GM12878 (cell line): ENCODE measurements at regions of chr9 and their contacts with region 1.

Region 1: GRCh38 chr9:134391314-134392231 is 65.3 kb downstream of the RXRA start:
- DNase-seq: peak; percentile 69
- ATAC-seq: peak; percentile 72
- H3K4me3 ChIP-seq: peak overlapping the region; percentile 79
- H3K27ac ChIP-seq: peak overlapping the region; percentile 98
- H3K4me1 ChIP-seq: peaks cover 51% of the 10 kb centered on the region
- H3K27me3 ChIP-seq: no peaks in the 10 kb centered on the region
- CTCF ChIP-seq: peak in 1 of 3 experiments; percentile 9; a peak in 1 of 6 replicates
- EP300 ChIP-seq: peak; percentile 74 to 92
- POLR2A ChIP-seq: no peak
- RAD21 ChIP-seq: 0 out of 2 replicates have a peak, but pooled peaks have one; percentile 10

Region 2: DNA sequence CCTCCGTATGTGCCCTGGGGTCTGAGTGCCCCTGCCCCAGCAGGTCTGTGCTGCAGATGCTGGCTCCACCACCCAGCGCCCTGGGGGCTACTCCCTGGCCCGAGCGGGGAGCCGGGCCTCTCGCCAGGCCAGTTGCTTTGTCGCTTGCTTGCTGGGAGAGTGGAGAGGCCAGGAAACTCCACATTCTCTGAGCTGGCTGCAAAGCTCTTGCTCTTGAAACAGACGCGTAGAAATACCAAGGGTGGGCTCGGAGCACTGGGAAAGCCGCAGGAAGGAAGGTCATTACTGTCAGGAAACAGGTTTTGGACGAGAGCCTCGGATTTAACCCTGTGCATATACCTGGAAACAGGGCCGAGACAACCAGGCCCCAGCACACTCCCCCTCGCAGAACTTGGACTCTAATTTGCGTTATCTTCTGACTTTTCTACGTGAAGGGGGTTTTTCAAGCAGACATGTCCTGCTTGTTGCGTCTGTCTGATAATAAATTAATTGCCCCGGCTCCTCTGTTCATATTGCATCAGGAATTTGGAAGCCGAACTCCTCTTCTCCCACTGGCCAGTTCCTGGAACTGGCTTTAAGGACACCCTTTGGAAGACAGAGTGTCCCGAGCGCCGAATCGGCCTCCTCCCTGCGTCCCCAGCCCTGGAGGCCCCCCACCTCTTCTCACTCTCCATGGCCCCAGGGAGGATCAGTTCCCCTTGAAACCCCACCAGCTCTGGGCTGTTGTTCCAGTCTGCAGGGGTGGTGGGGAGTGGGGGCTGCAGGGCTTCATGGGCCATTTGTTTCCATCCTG is 845.9 kb before region 1 on chr9:
- CTCF ChIA-PET with region 1: no interaction called
- POLR2A ChIA-PET with region 1: no interaction called
- RAD21 ChIA-PET with region 1: no interaction called
- SMC1A ChIA-PET with region 1: no interaction called
- in situ Hi-C with region 1: no loop called
- intact Hi-C with region 1: no loop called
- DNase-seq: no peak
- ATAC-seq: no peak
- H3K4me3 ChIP-seq: no peak overlapping the region
- H3K27ac ChIP-seq: no peak overlapping the region
- H3K4me1 ChIP-seq: no peaks in the 10 kb centered on the region
- H3K27me3 ChIP-seq: peaks cover 0 to 5% of the 10 kb centered on the region in 2 experiments; a peak in 3 of 4 replicates
- CTCF ChIP-seq: no peak
- EP300 ChIP-seq: no peak
- POLR2A ChIP-seq: no peak
- RAD21 ChIP-seq: no peak

Region 3: GRCh38 chr9:134375011-134375390 is 16.6 kb before region 1 on chr9:
- CTCF ChIA-PET with region 1: no interaction called
- POLR2A ChIA-PET with region 1: no interaction called
- RAD21 ChIA-PET with region 1: no interaction called
- SMC1A ChIA-PET with region 1: no interaction called
- in situ Hi-C with region 1: no loop called
- intact Hi-C with region 1: no loop called
- DNase-seq: no peak
- ATAC-seq: no peak
- H3K4me3 ChIP-seq: no peak overlapping the region
- H3K27ac ChIP-seq: no peak overlapping the region
- H3K4me1 ChIP-seq: no peaks in the 10 kb centered on the region
- H3K27me3 ChIP-seq: peaks cover 0 to 2% of the 10 kb centered on the region in 2 experiments; a peak in 1 of 4 replicates
- CTCF ChIP-seq: no peak
- EP300 ChIP-seq: no peak
- POLR2A ChIP-seq: no peak
- RAD21 ChIP-seq: no peak

Region 4: DNA sequence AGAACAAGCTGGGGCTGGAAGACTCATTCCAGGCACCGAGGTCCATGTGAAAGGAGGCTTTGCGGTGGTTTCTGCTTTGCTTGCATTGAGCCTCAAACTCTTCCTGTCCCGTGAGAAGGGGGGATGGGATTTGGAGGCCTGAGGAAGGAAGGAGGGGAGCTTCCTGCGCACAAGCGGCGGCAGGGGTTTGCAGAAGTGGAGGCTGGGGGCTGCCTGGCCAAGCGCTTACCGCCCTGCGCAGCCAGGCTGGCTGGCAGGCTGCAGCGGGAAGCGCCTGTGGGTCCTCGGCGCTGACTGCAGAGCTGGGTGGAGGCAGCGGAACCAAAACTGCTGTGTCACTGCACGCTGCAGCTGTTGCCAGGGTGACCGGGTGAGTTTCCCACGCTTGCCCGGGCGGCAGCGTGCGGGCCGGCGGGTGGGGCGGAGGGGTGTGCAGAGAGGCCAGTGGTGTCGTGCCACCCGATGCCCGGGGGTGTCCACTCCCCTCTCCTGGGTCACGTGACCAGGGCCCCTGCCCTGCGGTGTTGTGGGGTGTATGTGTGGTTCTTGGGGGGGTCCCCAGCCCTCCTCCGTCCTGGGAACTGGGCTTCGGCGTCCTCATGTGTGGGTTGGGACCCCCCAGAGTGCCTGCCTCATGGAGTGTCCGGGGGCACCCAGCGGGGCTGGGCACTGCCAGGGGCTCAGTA is 15.7 kb after region 1 on chr9:
- CTCF ChIA-PET with region 1: interaction called, 12 read pairs
- POLR2A ChIA-PET with region 1: interaction called, 88 read pairs
- RAD21 ChIA-PET with region 1: interaction called, 23 read pairs
- SMC1A ChIA-PET with region 1: interaction called, 39 read pairs
- in situ Hi-C with region 1: no loop called
- intact Hi-C with region 1: loop called (anchors 2 kb)
- DNase-seq: peak; percentile 70
- ATAC-seq: peak; percentile 89
- H3K4me3 ChIP-seq: peak overlapping the region; percentile 60
- H3K27ac ChIP-seq: peak overlapping the region; percentile 85
- H3K4me1 ChIP-seq: peaks cover 53% of the 10 kb centered on the region
- H3K27me3 ChIP-seq: no peaks in the 10 kb centered on the region
- CTCF ChIP-seq: no peak
- EP300 ChIP-seq: no peak; a peak in 1 of 4 replicates
- POLR2A ChIP-seq: no peak
- RAD21 ChIP-seq: no peak

Region 5: DNA sequence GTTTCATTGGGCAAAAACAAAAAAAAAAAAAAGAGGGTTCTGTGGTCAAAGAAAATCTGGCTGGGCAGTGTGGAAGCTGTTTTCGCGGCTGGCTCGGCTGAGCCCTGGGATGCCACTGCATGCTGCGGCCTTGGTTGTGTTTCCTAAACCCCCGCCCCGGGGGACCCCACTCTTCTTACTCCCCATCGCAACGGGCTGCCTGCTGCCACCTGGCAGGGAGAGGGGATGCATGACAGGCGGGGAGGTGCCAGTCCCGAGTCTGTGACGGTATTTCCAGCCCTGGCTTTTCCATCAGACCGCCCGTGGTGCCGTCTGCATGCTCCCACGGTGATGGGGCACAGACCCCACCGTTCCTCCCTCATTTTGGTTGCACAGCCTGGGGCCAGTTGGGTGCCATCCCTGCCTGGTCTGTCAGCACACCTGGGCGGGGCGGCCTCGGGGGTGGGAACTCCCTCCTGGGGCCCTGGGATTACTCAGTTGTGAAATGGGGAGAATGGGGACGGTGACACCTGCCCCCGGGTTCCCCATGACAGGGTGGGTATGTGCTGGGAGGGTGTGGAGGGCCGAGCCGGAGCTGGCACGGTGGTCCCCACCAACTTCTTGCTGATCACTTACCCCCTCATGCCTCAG is 35.7 kb after region 1 on chr9:
- CTCF ChIA-PET with region 1: no interaction called
- POLR2A ChIA-PET with region 1: interaction called, 4 read pairs
- RAD21 ChIA-PET with region 1: interaction called, 11 read pairs
- SMC1A ChIA-PET with region 1: interaction called, 3 read pairs
- in situ Hi-C with region 1: no loop called
- intact Hi-C with region 1: loop called (anchors 1 kb)
- DNase-seq: no peak
- ATAC-seq: peak; percentile 27; the same call in 1 of the 3 replicates
- H3K4me3 ChIP-seq: no peak overlapping the region
- H3K27ac ChIP-seq: no peak overlapping the region
- H3K4me1 ChIP-seq: peaks cover 8% of the 10 kb centered on the region
- H3K27me3 ChIP-seq: no peaks in the 10 kb centered on the region
- CTCF ChIP-seq: no peak
- EP300 ChIP-seq: no peak
- POLR2A ChIP-seq: no peak
- RAD21 ChIP-seq: no peak